ENCODE measurements at regions of chr9 and their contacts with region 1.

Region 1: DNA sequence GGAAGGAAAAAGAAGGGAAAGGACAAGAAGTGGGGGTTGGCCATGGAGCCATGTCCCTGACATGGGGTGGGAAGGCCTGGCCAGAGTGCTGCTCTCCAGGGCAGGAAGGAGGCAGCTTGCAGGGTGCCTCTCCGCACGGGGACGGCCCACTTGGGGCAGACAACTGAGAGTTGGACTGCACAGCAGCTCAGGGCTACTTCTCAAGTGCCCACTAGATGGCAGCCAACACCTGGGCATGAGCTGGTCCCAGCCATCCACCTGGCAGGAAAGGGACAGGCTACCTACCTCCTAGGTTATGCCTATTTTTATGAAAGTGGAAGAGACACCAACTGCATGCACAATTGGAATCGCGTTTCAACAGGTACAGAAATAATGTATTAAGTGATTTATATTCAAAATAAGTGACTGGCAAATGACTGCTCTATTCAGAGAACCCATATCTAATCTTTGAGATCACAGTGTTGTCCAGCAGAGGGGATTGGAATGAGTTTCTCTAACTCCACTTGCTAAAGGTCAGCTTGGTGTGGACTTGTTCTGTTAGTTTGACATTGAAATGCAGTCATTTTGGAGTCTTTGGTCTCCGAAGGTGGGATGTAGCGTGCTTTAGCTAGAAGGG is 113.4 kb downstream of the SYK start:
- H3K4me3 ChIP-seq: no peak overlapping the region
- H3K27ac ChIP-seq: no peak overlapping the region
- H3K4me1 ChIP-seq: no peaks in the 10 kb centered on the region
- CTCF ChIP-seq: peak; percentile 83

Region 2: DNA sequence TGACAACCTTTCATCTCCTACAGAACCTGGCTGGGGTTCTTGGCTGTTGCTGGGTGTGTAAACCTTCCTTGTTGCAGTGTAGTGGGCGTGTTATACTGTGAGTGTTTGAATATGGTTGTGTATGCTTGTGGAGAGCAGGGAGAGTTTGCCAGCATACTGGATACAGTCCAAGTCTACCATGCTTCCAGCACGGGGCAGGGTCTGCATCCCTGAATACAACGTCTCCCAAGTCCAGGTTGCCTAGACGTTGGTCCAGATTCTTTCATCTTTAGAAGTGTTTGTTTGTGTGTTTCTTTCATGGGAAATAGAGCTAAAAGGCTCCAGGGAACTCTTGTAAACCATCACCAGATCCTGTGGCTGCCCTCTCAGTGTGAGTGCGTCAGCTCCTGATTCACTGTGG is 67.0 kb before region 1 on chr9:
- CTCF ChIA-PET with region 1: no interaction called
- POLR2A ChIA-PET with region 1: no interaction called
- H3K4me3 ChIP-seq: no peak overlapping the region
- H3K27ac ChIP-seq: no peak overlapping the region
- H3K4me1 ChIP-seq: no peaks in the 10 kb centered on the region
- CTCF ChIP-seq: no peak

Region 3: GRCh38 chr9:90929626-90930025 is 14.7 kb after region 1 on chr9:
- CTCF ChIA-PET with region 1: interaction called, 14 read pairs
- POLR2A ChIA-PET with region 1: no interaction called
- H3K4me3 ChIP-seq: no peak overlapping the region
- H3K27ac ChIP-seq: no peak overlapping the region
- H3K4me1 ChIP-seq: no peaks in the 10 kb centered on the region
- CTCF ChIP-seq: no peak

Region 4: GRCh38 chr9:90985631-90986030 is 70.7 kb after region 1 on chr9:
- CTCF ChIA-PET with region 1: interaction called, 32 read pairs
- POLR2A ChIA-PET with region 1: no interaction called
- H3K4me3 ChIP-seq: no peak overlapping the region
- H3K27ac ChIP-seq: no peak overlapping the region
- H3K4me1 ChIP-seq: no peaks in the 10 kb centered on the region
- CTCF ChIP-seq: no peak

Region 5: GRCh38 chr9:91433180-91433579 is 518.2 kb after region 1 on chr9:
- CTCF ChIA-PET with region 1: interaction called, 94 read pairs
- POLR2A ChIA-PET with region 1: no interaction called
- H3K4me3 ChIP-seq: no peak overlapping the region
- H3K27ac ChIP-seq: no peak overlapping the region
- H3K4me1 ChIP-seq: no peaks in the 10 kb centered on the region
- CTCF ChIP-seq: no peak

Region 6: GRCh38 chr9:91727316-91727861 is 812.4 kb after region 1 on chr9:
- CTCF ChIA-PET with region 1: interaction called, 39 read pairs
- POLR2A ChIA-PET with region 1: no interaction called
- H3K4me3 ChIP-seq: no peak overlapping the region
- H3K27ac ChIP-seq: no peak overlapping the region
- H3K4me1 ChIP-seq: no peaks in the 10 kb centered on the region
- CTCF ChIP-seq: 0 out of 2 replicates have a peak, but pooled peaks have one; percentile 19

Measured in HEK293 (cell line).